ENCODE measurements at regions of chr17 and their contacts with region 1.

Region 1: GRCh38 chr17:67942810-67943209 is 53.5 kb downstream of the C17orf58 start:
- DNase-seq: no peak
- H3K4me3 ChIP-seq: no peak overlapping the region
- H3K27me3 ChIP-seq: no peaks in the 10 kb centered on the region
- CTCF ChIP-seq: peak; percentile 52

Region 2: GRCh38 chr17:67922503-67922902 is 20.3 kb before region 1 on chr17:
- CTCF ChIA-PET with region 1: interaction called, 16 read pairs
- POLR2A ChIA-PET with region 1: no interaction called
- DNase-seq: no peak
- H3K4me3 ChIP-seq: no peak overlapping the region
- H3K27me3 ChIP-seq: no peaks in the 10 kb centered on the region
- CTCF ChIP-seq: no peak

Region 3: GRCh38 chr17:68019675-68020408 is 77.0 kb after region 1 on chr17:
- CTCF ChIA-PET with region 1: no interaction called
- POLR2A ChIA-PET with region 1: no interaction called
- DNase-seq: peak; percentile 78
- H3K4me3 ChIP-seq: peak overlapping the region; percentile 50
- H3K27me3 ChIP-seq: no peaks in the 10 kb centered on the region
- CTCF ChIP-seq: peak; percentile 21; the same call in 1 of the 2 replicates